HepG2 (cell line): ENCODE measurements at regions of chr12 and their contacts with region 1.

Region 1: GRCh38 chr12:64256166-64256800 is 34.2 kb upstream of the KICS2 start:
- DNase-seq: peak; percentile 49
- ATAC-seq: no peak
- H3K4me3 ChIP-seq: no peak overlapping the region
- H3K27ac ChIP-seq: no peak overlapping the region
- H3K4me1 ChIP-seq: no peaks in the 10 kb centered on the region
- H3K27me3 ChIP-seq: no peaks in the 10 kb centered on the region
- CTCF ChIP-seq: peak; percentile 69
- EP300 ChIP-seq: no peak
- POLR2A ChIP-seq: no peak
- RAD21 ChIP-seq: peak; percentile 61; the same call in 1 of the 2 replicates

Region 2: GRCh38 chr12:63668028-63668799 is 588.1 kb before region 1 on chr12 and contains the start of gene DPY19L2:
- CTCF ChIA-PET with region 1: interaction called, 3 read pairs
- POLR2A ChIA-PET with region 1: no interaction called
- in situ Hi-C with region 1: no loop called
- intact Hi-C with region 1: loop called (anchors 5 kb)
- DNase-seq: peak; percentile 1
- ATAC-seq: peak; percentile 76
- H3K4me3 ChIP-seq: peak within 1 kb of the TSS in 2 of 3 experiments; percentile 39 to 50; a peak in 3 of 6 replicates
- H3K27ac ChIP-seq: no peak within 1 kb of the TSS
- H3K4me1 ChIP-seq: no peaks in the 10 kb centered on the region
- H3K27me3 ChIP-seq: 0 out of 5 replicates have a peak, but pooled peaks cover 0 to 6% of the 10 kb centered on the region in 2 experiments
- CTCF ChIP-seq: no peak
- EP300 ChIP-seq: no peak
- POLR2A ChIP-seq: no peak
- RAD21 ChIP-seq: no peak
- total RNA-seq, gene DPY19L2: not detected in 2 replicates

Region 3: GRCh38 chr12:63826006-63826585 is 430.2 kb before region 1 on chr12:
- CTCF ChIA-PET with region 1: interaction called, 24 read pairs
- POLR2A ChIA-PET with region 1: no interaction called
- in situ Hi-C with region 1: no loop called
- intact Hi-C with region 1: loop called (anchors 1 kb)
- DNase-seq: peak; percentile 56
- ATAC-seq: peak; percentile 79
- H3K4me3 ChIP-seq: no peak overlapping the region
- H3K27ac ChIP-seq: no peak overlapping the region
- H3K4me1 ChIP-seq: peaks cover 18% of the 10 kb centered on the region
- H3K27me3 ChIP-seq: no peaks in the 10 kb centered on the region
- CTCF ChIP-seq: peak; percentile 82
- EP300 ChIP-seq: no peak
- POLR2A ChIP-seq: no peak
- RAD21 ChIP-seq: peak; percentile 57; the same call in 1 of the 2 replicates

Region 4: GRCh38 chr12:63888908-63889635 is 367.2 kb before region 1 on chr12:
- CTCF ChIA-PET with region 1: no interaction called
- POLR2A ChIA-PET with region 1: no interaction called
- in situ Hi-C with region 1: no loop called
- intact Hi-C with region 1: no loop called
- DNase-seq: no peak
- ATAC-seq: peak; percentile 27
- H3K4me3 ChIP-seq: no peak overlapping the region
- H3K27ac ChIP-seq: peak overlapping the region; percentile 39
- H3K4me1 ChIP-seq: peaks cover 46% of the 10 kb centered on the region
- H3K27me3 ChIP-seq: no peaks in the 10 kb centered on the region
- CTCF ChIP-seq: no peak
- EP300 ChIP-seq: no peak
- POLR2A ChIP-seq: no peak
- RAD21 ChIP-seq: no peak

Region 5: GRCh38 chr12:64147011-64147631 is 109.2 kb before region 1 on chr12:
- CTCF ChIA-PET with region 1: no interaction called
- POLR2A ChIA-PET with region 1: no interaction called
- in situ Hi-C with region 1: no loop called
- intact Hi-C with region 1: no loop called
- DNase-seq: no peak
- ATAC-seq: no peak
- H3K4me3 ChIP-seq: no peak overlapping the region
- H3K27ac ChIP-seq: no peak overlapping the region
- H3K4me1 ChIP-seq: no peaks in the 10 kb centered on the region
- H3K27me3 ChIP-seq: no peaks in the 10 kb centered on the region
- CTCF ChIP-seq: no peak
- EP300 ChIP-seq: no peak
- POLR2A ChIP-seq: no peak
- RAD21 ChIP-seq: no peak

Region 6: DNA sequence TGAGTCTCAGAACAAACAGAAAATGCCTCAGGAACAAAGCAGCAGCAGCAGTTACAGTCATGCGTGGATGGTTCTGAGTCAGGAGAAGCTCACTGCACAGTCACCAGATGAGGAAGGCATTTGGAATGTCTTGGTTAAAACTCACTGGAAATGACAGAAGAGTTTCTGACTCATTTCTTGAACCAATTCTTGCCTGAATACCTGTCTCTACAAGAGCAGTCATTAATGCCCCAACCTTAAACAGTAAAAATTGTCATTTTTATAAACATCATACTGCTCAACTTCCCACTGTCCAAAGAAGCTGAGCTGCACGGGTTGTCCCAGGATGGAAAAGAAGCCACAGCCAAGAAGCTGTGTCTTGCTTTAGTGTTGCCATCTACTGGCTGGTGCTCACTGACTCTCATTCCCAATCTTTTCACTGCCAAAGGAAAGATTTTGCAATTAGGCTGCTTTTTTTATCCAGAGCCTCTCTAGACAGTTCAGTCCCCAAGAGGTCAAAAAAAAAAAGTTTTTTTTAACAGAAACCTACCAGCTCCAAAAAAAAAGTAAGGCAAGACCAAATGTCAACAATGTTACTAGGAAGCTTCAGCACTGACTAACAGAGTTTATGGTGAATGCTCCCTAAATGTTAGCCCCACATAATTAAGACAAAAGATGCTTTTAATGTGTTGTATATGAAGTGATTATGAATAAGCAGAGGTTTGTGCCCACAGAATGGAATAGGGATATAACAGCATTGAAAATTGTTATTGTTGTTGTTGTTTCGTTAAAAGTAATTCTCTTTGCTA is 74.6 kb before region 1 on chr12:
- CTCF ChIA-PET with region 1: no interaction called
- POLR2A ChIA-PET with region 1: no interaction called
- in situ Hi-C with region 1: no loop called
- intact Hi-C with region 1: loop called (anchors 1 kb)
- DNase-seq: peak; percentile 32
- ATAC-seq: peak; percentile 92
- H3K4me3 ChIP-seq: no peak overlapping the region
- H3K27ac ChIP-seq: no peak overlapping the region
- H3K4me1 ChIP-seq: 0 out of 2 replicates have a peak, but pooled peaks cover 7% of the 10 kb centered on the region
- H3K27me3 ChIP-seq: no peaks in the 10 kb centered on the region
- CTCF ChIP-seq: peak; percentile 77
- EP300 ChIP-seq: no peak
- POLR2A ChIP-seq: no peak
- RAD21 ChIP-seq: peak; percentile 58; the same call in 1 of the 2 replicates

Region 7: DNA sequence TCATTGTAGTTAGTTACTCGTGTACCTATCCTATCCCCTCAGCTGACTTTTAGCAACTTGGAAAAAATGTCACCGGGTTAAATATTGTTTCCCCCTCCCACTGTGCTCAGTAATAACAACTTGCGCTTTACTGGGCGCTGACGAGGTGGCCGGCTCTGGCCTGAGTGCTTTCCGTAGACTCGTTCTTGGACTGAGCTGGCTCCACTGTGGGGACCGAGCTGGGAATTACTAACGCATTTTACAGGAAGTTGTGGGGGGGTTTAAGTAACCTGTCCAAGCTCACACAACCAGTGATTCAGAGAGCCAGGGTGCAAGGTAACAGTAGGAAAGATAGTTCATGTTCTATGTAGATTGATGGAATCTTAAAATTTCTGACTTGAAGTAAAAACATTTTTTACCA is 48.3 kb after region 1 on chr12:
- CTCF ChIA-PET with region 1: no interaction called
- POLR2A ChIA-PET with region 1: no interaction called
- in situ Hi-C with region 1: no loop called
- intact Hi-C with region 1: no loop called
- DNase-seq: no peak
- ATAC-seq: no peak
- H3K4me3 ChIP-seq: no peak overlapping the region
- H3K27ac ChIP-seq: no peak overlapping the region
- H3K4me1 ChIP-seq: no peaks in the 10 kb centered on the region
- H3K27me3 ChIP-seq: peaks cover 0 to 10% of the 10 kb centered on the region in 2 experiments; a peak in 1 of 5 replicates
- CTCF ChIP-seq: no peak
- EP300 ChIP-seq: no peak
- POLR2A ChIP-seq: no peak
- RAD21 ChIP-seq: no peak